ENCODE measurements at regions of chr5 and their contacts with region 1.

Region 1: DNA sequence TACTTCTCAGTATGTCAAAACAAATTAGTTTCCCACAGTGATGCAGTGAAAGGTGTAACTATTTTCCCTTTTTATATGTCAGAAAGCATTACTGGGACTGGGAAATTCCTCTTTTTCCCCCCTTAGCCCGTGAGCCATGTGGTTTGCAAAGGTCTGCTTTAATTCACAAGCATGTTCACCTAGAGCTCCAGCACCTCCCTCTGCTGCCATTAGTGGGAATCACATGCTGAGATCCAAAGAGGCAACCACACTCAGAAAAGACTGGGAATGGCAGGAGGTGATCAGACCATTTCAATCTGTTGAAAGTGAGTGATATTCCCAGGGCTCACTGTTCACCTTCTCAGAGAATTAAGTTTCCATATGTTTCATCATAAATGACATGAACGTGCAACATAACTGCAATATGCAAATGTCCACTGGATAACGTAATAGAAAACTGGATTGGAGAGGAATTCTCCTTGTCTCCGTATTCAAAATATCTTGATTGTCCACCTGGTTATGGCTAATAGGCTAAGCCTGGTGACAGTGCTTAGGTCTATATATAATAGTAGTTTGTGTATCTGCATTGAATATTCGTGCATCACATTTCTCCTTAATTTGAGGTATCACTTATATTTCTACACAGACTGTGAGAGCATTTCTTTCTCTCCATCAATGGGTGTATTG is 703.5 kb upstream of the WWC1 start:
- ATAC-seq: peak; percentile 28 to 97 (median 94)
- H3K4me3 ChIP-seq: no peak overlapping the region
- H3K27ac ChIP-seq: no peak overlapping the region
- H3K4me1 ChIP-seq: peaks cover 10 to 18% of the 10 kb centered on the region in 2 donors

Region 2: GRCh38 chr5:168047043-168047668 is 459.3 kb after region 1 on chr5:
- in situ Hi-C with region 1: loop called in 1 of 9 experiments (anchors 25 kb)
- ATAC-seq: peak; percentile 72 to 94 (median 88)
- H3K4me3 ChIP-seq: no peak overlapping the region
- H3K27ac ChIP-seq: no peak overlapping the region
- H3K4me1 ChIP-seq: peaks cover 9 to 15% of the 10 kb centered on the region in 2 donors

Region 3: GRCh38 chr5:168219515-168220410 is 631.9 kb after region 1 on chr5:
- in situ Hi-C with region 1: loop called in 2 of 9 experiments (anchors 25 kb)
- ATAC-seq: peak; percentile 65 to 91 (median 80)
- H3K4me3 ChIP-seq: no peak overlapping the region
- H3K27ac ChIP-seq: no peak overlapping the region
- H3K4me1 ChIP-seq: peaks cover 5 to 6% of the 10 kb centered on the region in 2 donors

Measured in motor neuron (in vitro differentiated cells).